MCF 10A (cell line): ENCODE measurements at regions of chr4 and their contacts with region 1.

Region 1: DNA sequence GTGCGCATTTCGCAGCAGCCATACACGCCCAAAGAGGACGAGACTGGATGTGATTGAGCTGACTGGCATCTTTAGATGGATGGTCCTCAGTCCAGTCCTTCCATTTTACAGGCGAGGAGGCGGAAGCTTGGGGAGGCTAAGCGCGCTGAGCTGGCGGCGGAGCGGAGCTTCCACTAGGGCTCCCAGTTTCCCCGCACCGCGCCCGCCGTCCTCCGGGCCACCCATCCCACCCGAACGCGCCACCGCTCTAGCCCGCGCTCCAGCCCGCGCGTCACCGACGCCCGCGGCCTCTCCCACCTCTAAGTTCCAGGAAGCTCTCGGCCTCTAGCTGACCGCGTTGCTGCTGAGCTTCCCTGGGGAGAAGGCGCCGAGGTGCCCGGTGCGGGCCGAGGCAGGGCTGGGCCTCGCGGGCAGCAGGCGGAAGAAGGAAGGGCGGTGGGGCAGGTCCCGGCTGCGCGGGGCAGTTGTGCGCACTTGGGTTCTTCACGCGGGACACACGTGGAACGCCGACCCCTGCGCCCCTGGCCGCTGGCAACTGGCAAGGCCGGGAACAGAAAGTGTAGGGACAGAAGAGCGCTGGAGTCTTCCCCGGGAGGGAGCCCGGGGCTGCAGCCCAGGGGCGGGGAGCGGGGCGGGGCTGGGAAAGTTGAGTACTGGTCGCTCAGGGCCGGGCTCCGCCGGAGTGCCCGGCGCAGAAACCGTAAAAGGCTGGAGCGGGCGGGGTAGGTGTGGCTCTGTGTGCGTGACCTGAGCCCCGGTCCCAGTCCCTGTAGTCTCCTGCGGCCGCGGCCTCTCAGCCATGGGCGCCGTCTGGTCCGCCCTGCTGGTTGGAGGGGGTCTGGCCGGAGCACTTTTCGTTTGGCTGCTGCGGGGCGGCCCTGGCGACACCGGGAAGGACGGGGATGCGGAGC is at the start of gene STBD1:
- DNase-seq: peak; percentile 73
- H3K4me3 Mint-ChIP-seq: peak within 1 kb of the TSS; percentile 94
- H3K27ac Mint-ChIP-seq: peak within 1 kb of the TSS; percentile 66
- H3K4me1 Mint-ChIP-seq: peaks cover 39% of the 10 kb centered on the region
- H3K27me3 Mint-ChIP-seq: no peaks in the 10 kb centered on the region
- CTCF ChIP-seq: no peak
- total RNA-seq, gene STBD1: 3.7 and 5.7 TPM in 2 replicates

Region 2: GRCh38 chr4:76213415-76214176 is 92.6 kb before region 1 on chr4 and contains the start of gene SCARB2:
- CTCF ChIA-PET with region 1: interaction called, 6 read pairs
- POLR2A ChIA-PET with region 1: interaction called, 76 read pairs
- intact Hi-C with region 1: loop called (anchors 5 kb)
- DNase-seq: peak; percentile 83
- H3K4me3 Mint-ChIP-seq: peak within 1 kb of the TSS; percentile 74
- H3K27ac Mint-ChIP-seq: peak within 1 kb of the TSS; percentile 78
- H3K4me1 Mint-ChIP-seq: peaks cover 50% of the 10 kb centered on the region
- H3K27me3 Mint-ChIP-seq: no peaks in the 10 kb centered on the region
- CTCF ChIP-seq: no peak
- total RNA-seq, gene SCARB2: 67.2 and 71.4 TPM in 2 replicates

Region 3: DNA sequence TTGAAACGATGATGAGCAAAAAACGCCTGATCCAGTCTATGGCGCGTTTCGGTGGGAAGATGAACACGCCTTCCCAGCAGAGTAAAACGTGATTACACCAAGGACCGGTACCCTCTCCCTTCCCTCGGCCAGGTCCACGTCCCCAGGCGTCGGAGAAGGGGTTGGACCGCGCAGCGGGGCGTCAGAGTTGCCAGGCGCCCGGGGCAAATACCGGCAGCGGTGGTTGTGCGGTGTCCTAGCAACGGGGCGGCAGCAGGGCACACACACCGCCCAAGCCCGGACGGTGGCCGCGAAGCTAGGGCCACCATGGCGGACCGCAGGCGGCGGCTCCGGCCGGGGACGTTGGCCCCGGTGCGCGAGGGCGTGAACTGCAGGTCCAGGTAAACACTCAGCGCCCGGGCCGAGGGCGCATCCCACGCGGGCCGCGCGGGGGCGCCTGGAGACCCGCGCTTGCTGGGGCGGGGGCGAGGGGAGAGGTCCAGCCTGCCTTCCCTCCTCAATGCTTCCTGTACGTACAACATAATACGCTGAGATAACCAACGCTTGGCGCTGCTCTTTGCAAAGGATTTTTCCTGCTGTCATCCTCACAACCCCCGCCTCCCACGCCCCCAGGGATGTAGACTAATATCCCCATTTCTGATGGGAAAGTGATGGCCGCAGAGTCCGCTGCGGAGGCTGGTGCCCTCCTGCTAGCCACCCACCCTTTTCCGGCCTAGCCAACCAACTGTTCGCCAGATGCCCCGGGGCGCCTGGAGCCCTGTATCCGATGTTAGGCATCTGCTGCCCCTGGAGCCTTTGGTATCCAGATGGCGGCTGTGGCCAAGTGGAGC is 54.6 kb before region 1 on chr4 and contains the start of gene FAM47E:
- CTCF ChIA-PET with region 1: interaction called, 5 read pairs
- POLR2A ChIA-PET with region 1: interaction called, 6 read pairs
- intact Hi-C with region 1: loop called (anchors 2 kb)
- DNase-seq: peak; percentile 45
- H3K4me3 Mint-ChIP-seq: peak within 1 kb of the TSS; percentile 70
- H3K27ac Mint-ChIP-seq: peak within 1 kb of the TSS; percentile 7
- H3K4me1 Mint-ChIP-seq: no peaks in the 10 kb centered on the region
- H3K27me3 Mint-ChIP-seq: peaks cover 47% of the 10 kb centered on the region
- CTCF ChIP-seq: peak; percentile 47
- total RNA-seq, gene FAM47E: 1.0 TPM in 2 replicates

Region 4: DNA sequence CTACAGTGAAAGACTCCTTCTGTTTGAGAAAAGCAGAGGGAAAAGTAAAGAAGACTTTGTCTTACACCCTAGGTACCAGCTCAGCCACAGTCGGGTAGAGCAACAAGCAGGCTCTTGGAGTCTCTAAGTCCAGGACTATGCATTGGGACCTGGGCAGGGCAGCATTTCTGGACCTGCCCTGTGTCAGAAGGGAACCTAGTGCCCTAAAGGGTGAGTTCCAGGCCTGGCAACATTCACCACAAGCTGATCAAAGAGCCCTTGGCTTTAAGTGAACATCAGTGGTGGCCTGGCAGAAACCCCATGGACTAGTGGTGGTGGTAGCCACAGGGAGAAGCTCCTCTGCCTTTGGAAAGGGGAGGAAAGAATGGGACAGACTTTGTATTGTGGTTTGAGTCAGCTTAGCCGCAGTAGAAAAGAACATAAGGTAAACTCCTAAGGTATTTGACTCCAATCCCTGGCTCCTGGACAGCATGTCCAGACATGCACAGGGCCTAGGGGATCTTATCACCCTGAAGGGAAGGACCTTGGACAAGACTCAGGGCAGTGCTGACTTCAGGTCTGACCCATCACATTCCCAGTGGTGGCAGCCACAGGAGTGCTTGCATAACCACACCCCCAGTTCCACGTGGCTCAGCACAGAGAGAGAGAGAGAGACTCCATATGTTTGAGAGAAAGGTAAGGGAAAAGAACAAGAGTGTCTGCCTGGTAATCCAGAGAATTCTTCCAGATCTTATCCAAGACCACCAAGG is 82.1 kb after region 1 on chr4:
- CTCF ChIA-PET with region 1: interaction called, 23 read pairs
- POLR2A ChIA-PET with region 1: interaction called, 28 read pairs
- intact Hi-C with region 1: no loop called
- DNase-seq: peak; percentile 91
- H3K4me3 Mint-ChIP-seq: no peak overlapping the region
- H3K27ac Mint-ChIP-seq: peak overlapping the region; percentile 95
- H3K4me1 Mint-ChIP-seq: peaks cover 14% of the 10 kb centered on the region
- H3K27me3 Mint-ChIP-seq: no peaks in the 10 kb centered on the region
- CTCF ChIP-seq: no peak